ENCODE measurements at regions of chr13 and their contacts with region 1.

Region 1: GRCh38 chr13:24491845-24492244 is 20.7 kb downstream of the PARP4 start:
- H3K4me3 Mint-ChIP-seq: no peak overlapping the region
- H3K27ac Mint-ChIP-seq: no peak overlapping the region
- H3K4me1 Mint-ChIP-seq: no peaks in the 10 kb centered on the region
- H3K27me3 Mint-ChIP-seq: no peaks in the 10 kb centered on the region

Region 2: GRCh38 chr13:24443366-24443765 is 48.5 kb before region 1 on chr13:
- intact Hi-C with region 1: loop called (anchors 5 kb)
- H3K4me3 Mint-ChIP-seq: no peak overlapping the region
- H3K27ac Mint-ChIP-seq: no peak overlapping the region
- H3K4me1 Mint-ChIP-seq: no peaks in the 10 kb centered on the region
- H3K27me3 Mint-ChIP-seq: no peaks in the 10 kb centered on the region

Region 3: GRCh38 chr13:24473686-24474085 is 18.2 kb before region 1 on chr13:
- intact Hi-C with region 1: no loop called
- H3K4me3 Mint-ChIP-seq: no peak overlapping the region
- H3K27ac Mint-ChIP-seq: peak overlapping the region; percentile 5
- H3K4me1 Mint-ChIP-seq: no peaks in the 10 kb centered on the region
- H3K27me3 Mint-ChIP-seq: no peaks in the 10 kb centered on the region

Region 4: DNA sequence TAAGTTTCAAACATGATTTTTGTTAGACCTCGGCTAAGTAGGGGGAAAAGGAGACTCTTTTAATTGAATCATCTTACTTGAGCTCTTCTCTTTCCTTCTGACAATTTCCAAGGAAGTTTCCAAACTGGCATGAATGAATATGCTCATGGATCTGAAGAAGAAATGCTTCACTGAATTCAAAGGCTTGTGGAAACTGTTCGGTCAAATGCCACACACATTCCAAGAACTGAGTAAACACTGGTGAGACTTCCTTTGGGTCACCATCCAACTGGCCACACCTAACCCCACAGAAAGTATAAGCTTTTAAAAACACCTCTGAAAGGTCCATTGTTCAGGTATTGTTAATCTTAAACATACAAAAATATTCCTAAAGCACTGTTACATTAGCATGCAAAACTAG is 761.8 kb after region 1 on chr13:
- intact Hi-C with region 1: loop called (anchors 10 kb)
- H3K4me3 Mint-ChIP-seq: no peak overlapping the region
- H3K27ac Mint-ChIP-seq: no peak overlapping the region
- H3K4me1 Mint-ChIP-seq: peaks cover 20% of the 10 kb centered on the region
- H3K27me3 Mint-ChIP-seq: no peaks in the 10 kb centered on the region